IMR-90 (cell line): ENCODE measurements at regions of chr11 and their contacts with region 1.

Region 1: GRCh38 chr11:112265721-112266409 is 5.2 kb upstream of the PLET1 start:
- DNase-seq: peak; percentile 34
- ATAC-seq: peak; percentile 84
- H3K4me3 ChIP-seq: no peak overlapping the region
- H3K27ac ChIP-seq: no peak overlapping the region
- H3K4me1 ChIP-seq: peaks cover 12% of the 10 kb centered on the region
- H3K27me3 ChIP-seq: no peaks in the 10 kb centered on the region
- CTCF ChIP-seq: no peak
- POLR2A ChIP-seq: no peak
- RAD21 ChIP-seq: no peak

Region 2: DNA sequence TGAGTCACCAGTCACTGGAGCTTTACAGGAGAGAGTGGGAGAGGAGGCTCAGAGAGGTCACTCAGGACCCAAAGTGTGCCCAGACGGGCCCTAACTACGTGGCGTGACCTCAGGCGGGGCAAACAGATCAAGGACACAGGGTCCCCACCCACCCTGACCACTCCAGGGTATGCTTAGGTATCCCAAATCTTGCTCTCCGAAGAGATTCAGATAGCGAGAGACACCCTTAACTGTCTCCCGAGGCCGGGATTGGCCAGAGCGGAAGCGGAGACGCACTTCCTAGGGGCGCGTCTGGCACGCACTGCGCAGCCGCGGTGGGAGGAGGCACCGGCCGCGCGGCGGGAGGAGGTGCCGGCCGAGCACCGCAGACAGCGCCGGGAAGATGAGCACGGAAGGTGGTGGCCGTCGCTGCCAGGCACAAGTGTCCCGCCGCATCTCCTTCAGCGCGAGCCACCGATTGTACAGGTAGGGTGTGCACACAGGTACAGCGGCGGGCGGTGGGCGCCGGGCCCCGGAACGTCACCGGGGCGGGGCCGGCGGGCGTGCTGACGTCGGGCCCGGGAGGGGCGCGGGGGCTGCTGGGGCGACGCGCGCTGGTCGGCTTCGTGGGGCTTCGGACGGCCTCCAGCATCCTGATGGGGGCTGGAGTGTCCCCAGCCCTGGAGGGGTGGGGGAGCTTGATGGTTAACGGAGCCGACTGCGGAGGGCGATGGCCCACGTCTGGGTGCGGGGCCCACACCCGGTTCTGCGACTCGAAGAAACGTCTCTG is 39.6 kb before region 1 on chr11 and contains the start of gene PTS:
- CTCF ChIA-PET with region 1: no interaction called
- POLR2A ChIA-PET with region 1: interaction called, 8 read pairs
- dilution Hi-C with region 1: no loop called
- in situ Hi-C with region 1: no loop called
- intact Hi-C with region 1: loop called (anchors 2 kb)
- DNase-seq: peak; percentile 82
- ATAC-seq: peak; percentile 94
- H3K4me3 ChIP-seq: peak within 1 kb of the TSS; percentile 93
- H3K27ac ChIP-seq: peak within 1 kb of the TSS; percentile 98
- H3K4me1 ChIP-seq: peaks cover 16% of the 10 kb centered on the region
- H3K27me3 ChIP-seq: no peaks in the 10 kb centered on the region
- CTCF ChIP-seq: no peak
- POLR2A ChIP-seq: peak; percentile 93
- RAD21 ChIP-seq: no peak
- total RNA-seq, gene PTS: 21.0 and 63.6 TPM in 2 replicates